ENCODE measurements at regions of chr17 and their contacts with region 1.

Region 1: DNA sequence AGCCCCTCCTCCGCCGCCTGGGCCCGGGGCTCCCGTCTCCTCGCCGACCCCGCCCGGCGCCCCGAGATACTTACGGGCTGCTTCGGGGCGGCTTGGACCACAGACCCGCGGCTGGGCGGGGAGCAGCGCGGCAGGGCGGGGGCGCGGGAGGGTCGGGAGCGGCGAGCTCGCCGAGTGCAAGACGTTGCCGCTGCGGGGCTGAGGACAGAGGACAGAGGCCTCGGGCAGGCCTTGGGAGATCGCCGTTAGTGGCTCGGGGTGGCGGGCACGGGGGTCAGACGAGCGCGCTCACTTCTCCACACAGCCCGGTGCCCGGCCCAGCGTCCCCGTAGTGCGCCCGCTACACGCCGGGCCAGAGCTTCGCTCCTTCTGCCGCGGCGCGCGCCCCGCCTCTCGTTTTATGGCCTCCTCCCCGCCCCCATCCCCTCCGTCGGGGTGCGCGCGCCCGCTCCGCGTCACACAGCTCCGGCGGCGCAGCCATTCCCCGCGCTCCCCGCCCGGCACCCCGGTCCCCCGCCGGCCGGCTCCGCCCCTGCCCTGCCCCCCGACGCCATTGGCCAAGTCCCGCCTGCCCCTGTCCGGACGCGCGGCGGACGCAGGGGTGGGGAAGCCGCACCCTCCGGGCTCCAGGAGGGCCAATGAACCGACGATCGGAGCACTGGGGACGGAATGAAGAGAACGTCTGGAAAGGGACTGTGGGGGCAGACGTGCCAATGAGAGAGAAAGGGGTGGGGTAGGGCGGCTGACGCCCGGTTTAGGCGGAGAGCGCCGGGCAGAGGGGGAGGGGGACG is at the start of gene TOB1:
- DNase-seq: peak; percentile 92 to 99 (median 97)
- ATAC-seq: peak; percentile 68
- H3K4me3 ChIP-seq: peak within 1 kb of the TSS; percentile 64 to 86
- H3K4me3 Mint-ChIP-seq: peak within 1 kb of the TSS; percentile 100
- H3K27ac ChIP-seq: peak within 1 kb of the TSS; percentile 89 to 97
- H3K27ac Mint-ChIP-seq: peak within 1 kb of the TSS; percentile 99
- H3K4me1 ChIP-seq: peaks cover 40% of the 10 kb centered on the region
- H3K4me1 Mint-ChIP-seq: peaks cover 52% of the 10 kb centered on the region
- H3K27me3 ChIP-seq: no peaks in the 10 kb centered on the region
- H3K27me3 Mint-ChIP-seq: no peaks in the 10 kb centered on the region
- CTCF ChIP-seq: no peak
- total RNA-seq, gene TOB1: 252 to 277 TPM

Region 2: GRCh38 chr17:50630524-50631194 is 235.5 kb before region 1 on chr17:
- CTCF ChIA-PET with region 1: no interaction called
- POLR2A ChIA-PET with region 1: no interaction called
- intact Hi-C with region 1: no loop called
- DNase-seq: peak; percentile 21 to 73 (median 59)
- ATAC-seq: peak; percentile 85
- H3K4me3 ChIP-seq: no peak overlapping the region
- H3K4me3 Mint-ChIP-seq: no peak overlapping the region
- H3K27ac ChIP-seq: no peak overlapping the region
- H3K27ac Mint-ChIP-seq: no peak overlapping the region
- H3K4me1 ChIP-seq: peaks cover 5% of the 10 kb centered on the region
- H3K4me1 Mint-ChIP-seq: no peaks in the 10 kb centered on the region
- H3K27me3 ChIP-seq: peaks cover 11 to 18% of the 10 kb centered on the region in 2 experiments
- H3K27me3 Mint-ChIP-seq: peaks cover 60% of the 10 kb centered on the region
- CTCF ChIP-seq: peak; percentile 72

Region 3: GRCh38 chr17:50834429-50835300 is 31.5 kb before region 1 on chr17:
- CTCF ChIA-PET with region 1: no interaction called
- POLR2A ChIA-PET with region 1: no interaction called
- intact Hi-C with region 1: no loop called
- DNase-seq: no peak
- ATAC-seq: no peak
- H3K4me3 ChIP-seq: no peak overlapping the region
- H3K4me3 Mint-ChIP-seq: no peak overlapping the region
- H3K27ac ChIP-seq: no peak overlapping the region
- H3K27ac Mint-ChIP-seq: no peak overlapping the region
- H3K4me1 ChIP-seq: no peaks in the 10 kb centered on the region
- H3K4me1 Mint-ChIP-seq: no peaks in the 10 kb centered on the region
- H3K27me3 ChIP-seq: no peaks in the 10 kb centered on the region
- H3K27me3 Mint-ChIP-seq: peaks cover 5% of the 10 kb centered on the region
- CTCF ChIP-seq: no peak

Region 4: GRCh38 chr17:50853015-50853615 is 13.1 kb before region 1 on chr17:
- CTCF ChIA-PET with region 1: interaction called, 64 read pairs
- POLR2A ChIA-PET with region 1: interaction called, 67 read pairs
- intact Hi-C with region 1: loop called in 1 of 2 experiments (anchors 1 kb)
- DNase-seq: peak in 2 of 9 experiments; percentile 6 to 25
- ATAC-seq: no peak
- H3K4me3 ChIP-seq: no peak overlapping the region
- H3K4me3 Mint-ChIP-seq: peak overlapping the region; percentile 77
- H3K27ac ChIP-seq: no peak overlapping the region
- H3K27ac Mint-ChIP-seq: peak overlapping the region; percentile 91
- H3K4me1 ChIP-seq: peaks cover 9% of the 10 kb centered on the region
- H3K4me1 Mint-ChIP-seq: peaks cover 15% of the 10 kb centered on the region
- H3K27me3 ChIP-seq: no peaks in the 10 kb centered on the region
- H3K27me3 Mint-ChIP-seq: no peaks in the 10 kb centered on the region
- CTCF ChIP-seq: no peak

Region 5: DNA sequence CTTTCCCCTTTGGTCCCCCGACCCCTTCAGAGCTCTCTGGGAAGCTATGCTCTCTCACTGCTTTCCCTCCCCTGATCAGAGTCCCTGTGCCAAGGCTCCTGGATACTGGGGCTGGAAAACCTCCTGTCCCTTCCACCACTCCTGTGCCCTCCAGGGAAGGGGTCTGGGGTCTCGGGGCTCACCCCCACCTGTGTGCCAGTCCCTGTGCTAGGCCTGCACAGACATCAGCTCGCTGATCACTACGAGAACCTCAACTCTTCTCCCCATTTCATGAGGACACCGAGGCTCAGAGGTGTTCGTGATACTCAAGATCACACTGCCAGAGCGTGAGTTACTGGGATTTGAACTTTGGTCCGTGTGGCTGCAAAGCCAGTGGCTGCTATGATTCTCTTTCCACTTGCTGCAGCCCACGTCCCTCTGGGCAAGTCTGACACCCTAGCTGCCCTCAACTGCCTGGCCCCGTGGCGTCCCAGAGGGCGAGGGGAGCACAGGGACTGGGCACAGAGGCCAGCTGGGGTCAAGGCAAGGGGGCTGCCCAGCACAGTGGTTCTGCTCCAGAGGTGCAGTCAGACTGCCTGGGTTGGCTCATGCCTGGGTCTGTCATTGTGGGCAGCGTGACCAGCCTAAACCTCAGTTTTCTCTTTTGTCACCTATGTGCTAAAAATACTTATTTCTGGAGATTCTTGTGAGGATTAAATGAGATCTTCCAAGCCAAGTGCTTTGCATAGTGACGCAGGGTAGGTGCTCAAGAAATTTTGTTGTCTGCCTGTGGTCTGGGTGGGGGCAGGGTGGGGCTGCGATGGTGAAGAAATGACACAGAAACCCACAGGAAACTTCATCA is 43.8 kb after region 1 on chr17:
- CTCF ChIA-PET with region 1: interaction called, 11 read pairs
- POLR2A ChIA-PET with region 1: interaction called, 196 read pairs
- intact Hi-C with region 1: loop called (anchors 1 kb)
- DNase-seq: peak; percentile 71 to 94 (median 77)
- ATAC-seq: peak; percentile 87
- H3K4me3 ChIP-seq: peak overlapping the region in 1 of 2 experiments; percentile 24
- H3K4me3 Mint-ChIP-seq: peak overlapping the region; percentile 55
- H3K27ac ChIP-seq: peak overlapping the region; percentile 83 to 92
- H3K27ac Mint-ChIP-seq: peak overlapping the region; percentile 93
- H3K4me1 ChIP-seq: peaks cover 74% of the 10 kb centered on the region
- H3K4me1 Mint-ChIP-seq: peaks cover 61% of the 10 kb centered on the region
- H3K27me3 ChIP-seq: no peaks in the 10 kb centered on the region
- H3K27me3 Mint-ChIP-seq: no peaks in the 10 kb centered on the region
- CTCF ChIP-seq: no peak

Region 6: GRCh38 chr17:50944054-50944901 is 78.1 kb after region 1 on chr17:
- CTCF ChIA-PET with region 1: interaction called, 761 read pairs
- POLR2A ChIA-PET with region 1: interaction called, 102 read pairs
- intact Hi-C with region 1: loop called (anchors 1 to 2 kb)
- DNase-seq: peak; percentile 57 to 92 (median 78)
- ATAC-seq: peak; percentile 89
- H3K4me3 ChIP-seq: peak overlapping the region; percentile 60 to 66
- H3K4me3 Mint-ChIP-seq: peak overlapping the region; percentile 76
- H3K27ac ChIP-seq: peak overlapping the region; percentile 72 to 76
- H3K27ac Mint-ChIP-seq: peak overlapping the region; percentile 90
- H3K4me1 ChIP-seq: peaks cover 41% of the 10 kb centered on the region
- H3K4me1 Mint-ChIP-seq: peaks cover 37% of the 10 kb centered on the region
- H3K27me3 ChIP-seq: no peaks in the 10 kb centered on the region
- H3K27me3 Mint-ChIP-seq: no peaks in the 10 kb centered on the region
- CTCF ChIP-seq: no peak

Region 7: GRCh38 chr17:51120739-51121617 is 254.8 kb after region 1 on chr17 and contains the start of gene SPAG9:
- CTCF ChIA-PET with region 1: no interaction called
- POLR2A ChIA-PET with region 1: interaction called, 8 read pairs
- intact Hi-C with region 1: loop called (anchors 1 to 2 kb)
- DNase-seq: peak; percentile 79 to 96 (median 88)
- ATAC-seq: peak; percentile 84
- H3K4me3 ChIP-seq: peak within 1 kb of the TSS; percentile 96
- H3K4me3 Mint-ChIP-seq: peak within 1 kb of the TSS; percentile 94
- H3K27ac ChIP-seq: peak within 1 kb of the TSS; percentile 95
- H3K27ac Mint-ChIP-seq: peak within 1 kb of the TSS; percentile 98
- H3K4me1 ChIP-seq: peaks cover 38% of the 10 kb centered on the region
- H3K4me1 Mint-ChIP-seq: peaks cover 49% of the 10 kb centered on the region
- H3K27me3 ChIP-seq: no peaks in the 10 kb centered on the region
- H3K27me3 Mint-ChIP-seq: no peaks in the 10 kb centered on the region
- CTCF ChIP-seq: no peak
- total RNA-seq, gene SPAG9: 75.7 to 77.6 TPM